ENCODE measurements at regions of chr1 and their contacts with region 1.

Region 1: GRCh38 chr1:45569962-45570581 is 13.8 kb upstream of the NASP start:
- DNase-seq: peak; percentile 69 to 93
- H3K4me3 ChIP-seq: no peak overlapping the region
- CTCF ChIP-seq: peak in 1 of 3 donors; percentile 81
- POLR2A ChIP-seq: no peak

Region 2: DNA sequence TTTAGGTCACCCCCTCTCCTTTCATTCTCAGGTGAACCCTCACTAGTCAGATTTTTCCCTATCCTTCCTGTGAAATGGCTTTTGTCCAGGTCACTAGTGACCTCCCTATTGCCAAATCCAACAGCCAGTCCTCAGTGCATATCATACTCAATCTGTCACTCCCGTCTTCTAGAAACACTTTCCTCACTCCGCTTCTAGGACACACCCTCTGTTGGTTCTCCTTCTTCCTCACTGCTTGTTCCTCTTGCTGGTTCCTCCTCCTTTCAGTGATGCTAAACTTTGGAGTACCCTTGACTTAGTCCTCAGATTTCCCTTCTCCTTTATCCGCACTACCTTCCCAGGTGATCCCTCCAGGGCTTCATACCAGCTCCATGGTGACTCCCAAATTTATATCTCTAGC is 1070.8 kb before region 1 on chr1:
- intact Hi-C with region 1: loop called (anchors 10 kb)
- DNase-seq: peak in 1 of 2 donors; percentile 3
- H3K4me3 ChIP-seq: no peak overlapping the region
- CTCF ChIP-seq: no peak
- POLR2A ChIP-seq: no peak

Region 3: DNA sequence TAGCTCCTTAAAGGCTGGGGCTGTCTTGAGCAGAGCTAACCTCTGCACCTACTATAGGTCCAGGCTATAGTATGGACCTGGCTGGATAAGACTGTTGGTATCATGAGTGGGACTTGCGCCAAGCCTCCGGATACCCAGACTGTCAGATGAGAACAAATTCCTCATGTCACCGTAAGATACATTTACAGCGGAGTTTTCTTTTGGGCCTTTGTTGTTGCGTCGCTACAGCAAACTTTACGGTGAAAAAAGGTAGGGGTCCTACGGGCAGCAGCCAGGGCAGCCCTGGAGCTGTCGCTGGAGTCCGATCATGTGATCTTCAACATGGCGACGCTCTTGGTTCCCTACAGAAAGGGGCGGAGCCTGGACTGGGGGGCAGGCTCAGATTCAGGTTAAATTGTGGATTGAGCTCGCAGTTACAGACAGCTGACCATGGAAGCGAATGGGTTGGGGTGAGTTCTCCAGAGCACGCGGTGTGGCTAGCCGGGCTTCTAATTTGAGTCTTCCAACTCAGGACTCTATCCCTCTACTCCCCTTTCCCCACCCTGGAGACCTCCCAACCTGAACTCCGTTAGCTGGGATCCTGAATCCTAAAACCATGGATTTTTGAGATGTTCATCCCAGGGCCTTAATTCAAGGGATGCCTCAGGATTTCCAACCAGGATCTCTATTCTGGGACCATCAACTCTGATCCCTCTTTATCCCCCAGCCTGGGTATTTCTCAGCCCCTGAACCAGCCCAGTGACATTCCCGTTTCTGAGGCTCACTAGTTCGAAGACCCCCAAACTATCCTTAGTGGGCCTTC is 558.0 kb before region 1 on chr1 and contains the start of gene UROD:
- intact Hi-C with region 1: loop called (anchors 10 kb)
- DNase-seq: peak; percentile 95 to 97
- H3K4me3 ChIP-seq: peak within 1 kb of the TSS; percentile 92
- CTCF ChIP-seq: no peak
- POLR2A ChIP-seq: no peak
- total RNA-seq, gene UROD: 26.6 to 59.0 (median 45.8) TPM

Region 4: DNA sequence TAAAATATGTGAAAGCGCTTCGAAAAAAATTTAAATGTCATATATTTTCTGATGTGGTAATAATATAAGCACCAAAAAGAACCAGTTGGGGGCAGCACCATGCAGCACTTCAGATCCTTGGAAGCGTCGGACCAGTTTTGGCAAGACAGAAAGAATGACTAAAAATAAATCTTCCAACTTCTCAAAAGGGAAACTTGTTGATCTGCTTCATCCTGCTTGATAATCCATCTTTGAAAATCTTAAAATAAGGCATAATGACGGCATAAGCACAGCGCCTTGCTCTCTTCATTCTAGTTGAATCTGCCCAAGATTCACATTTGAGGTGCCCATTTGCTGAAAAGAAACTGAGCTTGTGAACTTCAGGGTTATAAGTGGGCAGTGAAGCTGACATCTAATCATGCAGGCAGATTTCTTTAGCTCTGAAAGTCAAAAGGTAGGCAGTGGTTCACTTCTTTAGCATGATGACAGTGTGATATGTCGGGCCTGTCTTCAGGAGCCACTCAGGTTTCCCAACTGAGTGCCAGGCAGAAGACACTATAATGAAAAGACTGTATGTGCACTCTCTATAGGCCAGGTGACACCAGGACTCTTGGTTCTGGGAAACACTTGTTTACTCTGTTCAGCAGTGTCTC is 210.1 kb before region 1 on chr1:
- intact Hi-C with region 1: loop called (anchors 5 kb)
- DNase-seq: peak; percentile 77 to 85
- H3K4me3 ChIP-seq: no peak overlapping the region
- CTCF ChIP-seq: no peak
- POLR2A ChIP-seq: no peak

Region 5: DNA sequence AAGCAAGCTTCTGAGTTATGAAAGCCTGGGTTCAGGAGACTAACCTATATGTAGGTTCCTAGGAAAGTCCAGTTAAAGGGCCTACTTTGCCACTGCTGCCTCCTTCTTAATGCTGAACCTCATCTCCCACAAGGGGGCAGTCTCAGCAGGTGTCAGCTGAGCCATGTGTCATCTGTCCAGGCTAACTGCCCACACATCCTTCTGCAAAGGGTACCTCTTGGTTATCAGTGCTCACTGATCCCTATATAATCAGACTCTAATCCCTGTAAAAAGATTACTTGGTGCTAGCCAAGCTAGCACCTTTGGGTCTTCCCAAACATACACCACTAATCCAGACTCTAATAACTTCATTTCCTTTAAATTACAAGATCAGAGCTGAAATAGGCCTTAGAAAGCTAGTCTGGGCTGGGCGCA is 57.4 kb before region 1 on chr1:
- intact Hi-C with region 1: loop called (anchors 10 kb)
- DNase-seq: peak in 1 of 2 donors; percentile 55
- H3K4me3 ChIP-seq: no peak overlapping the region
- CTCF ChIP-seq: peak in 1 of 3 donors; percentile 43
- POLR2A ChIP-seq: no peak